Activated CD4-positive, alpha-beta memory T cell treated with anti-CD3 and anti-CD28 coated beads for 36 hours (primary cell): ENCODE measurements at regions of chr5 and their contacts with region 1.

Region 1: GRCh38 chr5:52743970-52744369 is 43.7 kb upstream of the ITGA1 start:
- DNase-seq: peak; percentile 55
- H3K4me3 Mint-ChIP-seq: no peak overlapping the region
- H3K27ac Mint-ChIP-seq: peak overlapping the region; percentile 23
- H3K4me1 Mint-ChIP-seq: peaks cover 41% of the 10 kb centered on the region
- H3K27me3 Mint-ChIP-seq: no peaks in the 10 kb centered on the region

Region 2: DNA sequence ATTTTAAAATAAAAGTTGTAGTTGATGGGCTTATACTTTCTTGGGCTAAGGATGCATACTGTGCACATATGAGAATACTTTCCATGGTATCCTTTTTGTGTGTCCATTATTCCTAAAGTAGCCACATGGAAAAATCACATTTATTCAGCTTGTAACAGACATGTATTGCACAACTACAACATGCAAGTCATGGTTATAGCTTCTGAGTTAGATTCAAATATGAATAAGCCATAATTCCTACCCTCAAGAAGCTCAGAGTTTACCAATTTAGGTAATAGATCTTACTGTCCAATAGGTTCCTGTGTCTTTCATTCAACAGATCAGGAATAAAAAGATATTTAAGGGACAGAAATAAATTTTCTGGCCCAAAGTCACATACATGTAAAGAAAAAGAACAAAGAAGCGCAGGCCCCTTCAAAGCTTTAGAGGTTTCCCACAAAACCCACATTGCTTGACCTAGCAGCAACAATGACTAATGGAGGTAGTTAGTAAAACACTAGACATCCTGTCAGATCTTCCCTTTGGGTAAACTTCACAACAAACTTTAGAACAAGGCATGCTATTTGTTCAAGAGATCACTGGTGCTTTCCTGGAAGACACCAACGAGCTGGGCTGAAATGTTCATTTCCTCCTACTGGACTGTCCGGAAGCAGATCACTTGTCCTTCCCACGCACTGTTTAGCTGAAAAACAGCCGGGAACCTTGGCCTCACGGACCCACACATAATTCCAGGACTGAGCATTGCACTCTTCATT is 34.6 kb before region 1 on chr5:
- CTCF ChIA-PET with region 1: no interaction called
- POLR2A ChIA-PET with region 1: interaction called, 3 read pairs
- intact Hi-C with region 1: loop called (anchors 2 kb)
- DNase-seq: peak; percentile 31
- H3K4me3 Mint-ChIP-seq: no peak overlapping the region
- H3K27ac Mint-ChIP-seq: peak overlapping the region; percentile 35
- H3K4me1 Mint-ChIP-seq: peaks cover 36% of the 10 kb centered on the region
- H3K27me3 Mint-ChIP-seq: no peaks in the 10 kb centered on the region

Region 3: DNA sequence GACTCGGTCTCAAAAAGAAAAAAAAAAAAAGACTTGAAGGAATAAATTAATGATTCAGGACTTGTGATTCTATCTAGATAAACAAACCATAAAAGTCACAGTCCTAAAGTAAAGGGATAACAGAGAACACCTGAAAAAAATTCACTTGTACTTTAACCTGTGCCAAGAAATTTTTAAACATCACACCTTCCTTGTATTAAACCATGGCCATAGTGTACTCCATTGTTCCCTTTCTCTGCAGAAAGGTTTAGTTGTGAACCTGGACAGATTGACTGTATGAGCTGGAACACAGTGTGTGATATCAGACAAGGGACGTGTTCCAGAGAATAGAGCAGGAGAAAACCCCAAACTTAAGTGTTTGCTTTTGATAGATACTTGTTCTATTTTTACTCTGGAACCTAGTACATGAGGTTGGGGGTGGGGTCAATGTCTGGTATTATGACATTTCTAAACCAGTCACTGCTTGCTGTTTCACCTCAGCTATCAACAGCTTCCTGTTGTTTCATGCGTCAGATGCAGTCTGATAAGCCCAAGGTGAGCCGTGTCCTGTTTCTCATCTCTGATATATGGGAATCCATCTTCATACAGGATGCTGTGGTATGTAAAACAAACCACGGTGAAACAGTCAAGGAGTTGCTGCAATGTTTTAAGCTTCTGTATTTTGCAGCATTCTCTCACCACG is 18.8 kb before region 1 on chr5:
- CTCF ChIA-PET with region 1: no interaction called
- POLR2A ChIA-PET with region 1: no interaction called
- intact Hi-C with region 1: loop called (anchors 1 kb)
- DNase-seq: peak; percentile 71
- H3K4me3 Mint-ChIP-seq: no peak overlapping the region
- H3K27ac Mint-ChIP-seq: peak overlapping the region; percentile 75
- H3K4me1 Mint-ChIP-seq: peaks cover 39% of the 10 kb centered on the region
- H3K27me3 Mint-ChIP-seq: no peaks in the 10 kb centered on the region

Region 4: DNA sequence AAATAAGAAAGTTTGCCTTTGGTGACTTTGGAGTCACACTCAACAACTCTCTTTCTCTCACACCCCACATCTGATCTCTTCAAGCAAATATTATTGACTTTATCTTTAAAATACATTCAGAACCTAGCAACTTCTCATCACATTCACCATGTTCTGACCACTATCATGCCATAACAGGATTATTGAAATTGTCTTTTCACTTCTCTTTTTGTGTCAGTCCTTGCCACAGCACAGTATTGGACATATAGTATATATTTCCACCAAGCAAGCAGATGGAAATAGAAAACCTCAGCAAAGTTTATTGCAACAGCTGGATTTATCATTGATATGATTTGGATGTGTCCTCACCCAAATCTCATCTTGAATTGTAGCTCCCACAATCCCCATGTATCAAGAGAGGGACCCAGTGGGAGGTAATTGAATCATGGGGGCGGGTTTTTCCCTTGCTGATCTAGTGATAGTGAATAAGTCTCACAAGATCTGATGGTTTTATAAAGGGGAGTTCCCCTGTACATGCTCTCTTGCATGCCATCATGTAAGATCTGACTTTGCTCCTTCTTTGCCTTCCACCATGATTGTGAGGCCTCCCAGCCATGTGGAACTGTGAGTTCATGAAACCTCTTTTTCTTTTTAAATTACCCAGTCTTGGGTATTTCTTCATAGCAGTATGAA is 16.9 kb after region 1 on chr5:
- CTCF ChIA-PET with region 1: interaction called, 4 read pairs
- POLR2A ChIA-PET with region 1: no interaction called
- intact Hi-C with region 1: loop called (anchors 1 kb)
- DNase-seq: peak; percentile 56
- H3K4me3 Mint-ChIP-seq: no peak overlapping the region
- H3K27ac Mint-ChIP-seq: no peak overlapping the region
- H3K4me1 Mint-ChIP-seq: peaks cover 8% of the 10 kb centered on the region
- H3K27me3 Mint-ChIP-seq: no peaks in the 10 kb centered on the region

Region 5: GRCh38 chr5:52771343-52772039 is 27.5 kb after region 1 on chr5:
- CTCF ChIA-PET with region 1: interaction called, 4 read pairs
- POLR2A ChIA-PET with region 1: interaction called, 3 read pairs
- intact Hi-C with region 1: loop called (anchors 1 kb)
- DNase-seq: peak; percentile 63
- H3K4me3 Mint-ChIP-seq: no peak overlapping the region
- H3K27ac Mint-ChIP-seq: no peak overlapping the region
- H3K4me1 Mint-ChIP-seq: peaks cover 43% of the 10 kb centered on the region
- H3K27me3 Mint-ChIP-seq: no peaks in the 10 kb centered on the region